Activated T-helper 1 cell treated with anti-CD3 and anti-CD28 coated beads, Interleukin-12 subunit alpha, Interleukin-12 subunit beta, Interleukin-2, Interleukin-4 antibody, amounts not matched to agents 30 ng/mL and 10 ng/mL and 1 ng/mL, durations not matched to agents 14 hours and 24 hours and 36 hours (primary cell): ENCODE measurements at regions of chr6 and their contacts with region 1.

Region 1: DNA sequence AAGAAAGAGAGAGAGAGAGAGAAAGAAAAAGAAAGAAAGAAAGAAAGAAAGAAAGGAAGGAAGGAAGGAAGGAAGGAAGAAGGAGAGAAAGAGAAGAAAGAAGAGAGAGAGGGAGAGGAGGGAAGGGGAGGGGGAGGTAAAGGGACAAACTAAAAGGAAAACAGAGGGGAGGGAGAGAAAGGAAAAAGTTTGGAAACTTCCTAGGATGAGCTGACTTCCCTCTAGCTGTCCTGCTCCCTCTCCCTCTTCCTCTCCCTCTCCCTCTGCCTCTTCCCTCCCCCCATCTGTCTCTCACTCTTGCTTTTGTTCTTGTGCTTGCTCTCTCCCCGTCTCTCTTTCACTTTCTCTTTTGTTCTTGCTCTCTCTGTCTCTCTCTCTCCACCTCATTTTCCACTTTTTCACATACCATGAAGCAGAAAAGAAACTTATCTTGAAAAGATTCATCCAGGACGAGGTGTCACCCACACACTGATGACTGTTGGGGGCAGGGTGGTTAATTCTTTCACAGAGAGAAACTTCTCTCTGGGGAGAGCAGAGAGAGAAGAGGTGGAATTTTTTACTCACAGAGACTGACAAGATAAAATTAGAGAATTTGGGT is 56.4 kb upstream of the DUSP22 start:
- DNase-seq: peak; percentile 41
- H3K4me3 Mint-ChIP-seq: peak overlapping the region; percentile 56
- H3K27ac Mint-ChIP-seq: peak overlapping the region; percentile 88
- H3K4me1 Mint-ChIP-seq: peaks cover 57% of the 10 kb centered on the region
- H3K27me3 Mint-ChIP-seq: no peaks in the 10 kb centered on the region

Region 2: DNA sequence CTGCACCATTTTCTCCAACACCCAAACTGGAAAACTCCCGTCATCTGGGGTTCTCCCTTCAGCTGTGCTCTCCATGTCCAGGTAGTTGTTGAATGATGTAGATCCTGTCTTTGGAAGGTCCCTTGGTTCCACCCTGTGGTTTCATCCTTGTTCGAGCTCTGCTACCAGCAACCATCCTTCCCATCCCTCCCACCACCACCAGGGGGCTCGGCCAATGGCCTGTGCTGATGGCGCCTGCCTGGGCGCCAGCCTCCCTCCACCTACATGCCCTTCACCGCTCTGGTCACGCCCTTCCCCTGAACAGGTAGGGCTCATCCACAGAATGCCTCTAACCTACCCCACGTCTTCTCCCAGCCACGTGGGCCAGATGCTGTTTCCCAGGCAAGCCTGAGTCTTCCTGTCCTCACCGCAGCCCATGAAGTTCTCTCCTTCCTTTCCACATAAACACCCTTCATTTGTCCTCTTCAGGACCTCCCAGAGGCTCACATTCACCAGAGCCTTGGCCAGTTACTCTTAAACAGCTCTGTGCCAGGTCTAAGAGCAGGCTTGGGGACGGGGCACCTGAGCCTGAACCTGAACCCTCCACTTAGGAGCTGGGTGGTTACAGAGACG is 18.7 kb before region 1 on chr6:
- intact Hi-C with region 1: loop called (anchors 1 kb)
- DNase-seq: no peak
- H3K4me3 Mint-ChIP-seq: no peak overlapping the region
- H3K27ac Mint-ChIP-seq: no peak overlapping the region
- H3K4me1 Mint-ChIP-seq: peaks cover 53% of the 10 kb centered on the region
- H3K27me3 Mint-ChIP-seq: peaks cover 5% of the 10 kb centered on the region